Body of pancreas (tissue), 4 donors: ENCODE measurements at regions of chr19 and their contacts with region 1.

Region 1: DNA sequence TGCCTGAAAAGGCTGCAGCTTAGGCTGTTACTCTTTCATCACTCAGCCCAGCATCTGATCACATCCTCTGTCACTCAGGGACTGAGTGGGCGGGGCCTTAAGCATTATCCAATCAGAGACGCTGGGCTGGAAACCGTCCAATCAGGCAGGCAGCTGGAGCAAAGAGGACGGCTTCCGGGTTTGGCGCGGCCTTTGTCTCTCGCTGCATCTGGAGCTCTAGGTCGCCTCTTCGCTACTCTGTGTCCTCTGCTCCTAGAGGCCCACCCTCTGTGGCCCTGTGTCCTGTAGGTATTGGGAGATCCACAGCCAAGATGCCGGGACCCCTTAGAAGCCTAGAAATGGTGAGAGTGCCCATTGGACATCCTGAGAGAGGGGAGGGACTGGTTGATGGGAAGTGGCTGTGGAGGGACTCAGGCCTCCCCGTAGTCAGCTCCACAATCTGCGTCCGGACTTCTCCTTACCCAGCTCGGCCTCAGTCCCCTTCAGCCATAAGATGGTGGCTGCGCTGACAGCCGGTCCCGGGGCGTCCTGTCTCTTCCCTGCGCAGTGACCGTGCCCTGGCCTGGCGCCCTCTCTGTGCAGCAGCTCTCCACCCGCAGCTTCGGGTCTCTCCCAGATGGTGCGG is at the start of gene ZNF486:
- DNase-seq: peak; percentile 97 to 99 (median 98)
- ATAC-seq: peak; percentile 97
- H3K4me3 ChIP-seq: peak within 1 kb of the TSS; percentile 53 to 74
- H3K27ac ChIP-seq: peak within 1 kb of the TSS; percentile 34 to 83 (median 72)
- H3K4me1 ChIP-seq: peaks cover 9% of the 10 kb centered on the region
- H3K27me3 ChIP-seq: no peaks in the 10 kb centered on the region
- CTCF ChIP-seq: no peak
- POLR2A ChIP-seq: peak; percentile 51 to 88 (median 77)
- total RNA-seq, gene ZNF486: 3.0 to 6.2 TPM

Region 2: DNA sequence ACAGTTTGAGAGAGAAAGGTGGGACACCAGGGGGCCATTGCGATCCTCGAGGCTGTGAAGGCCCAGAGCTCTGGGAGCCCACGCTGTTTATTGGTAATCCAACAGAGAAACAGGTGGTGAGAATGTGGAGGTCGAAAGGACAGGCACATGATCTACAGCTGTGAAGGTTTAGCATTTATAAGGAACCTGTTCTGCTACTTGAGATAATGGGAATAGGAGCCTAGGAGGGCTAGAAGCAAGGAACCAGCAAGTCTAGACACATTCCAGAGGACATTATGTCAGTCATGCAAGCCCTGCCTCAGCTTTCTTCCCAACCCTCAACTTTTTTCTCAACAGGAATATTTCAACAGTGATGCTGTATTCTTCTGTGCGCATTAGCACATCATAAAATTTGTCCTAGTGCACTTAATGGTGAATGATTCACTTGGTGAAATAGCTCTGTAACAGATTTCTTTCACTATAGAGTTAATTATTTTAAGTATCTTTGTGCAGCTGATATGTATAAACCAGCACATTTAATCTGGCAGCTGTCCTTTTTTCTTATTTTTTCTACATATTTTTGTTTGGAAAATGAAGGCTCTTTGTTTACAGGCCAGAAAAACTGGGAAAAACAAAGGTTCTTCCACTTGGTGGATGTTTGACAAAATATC is 63.9 kb before region 1 on chr19:
- intact Hi-C with region 1: loop called (anchors 10 kb)
- DNase-seq: no peak
- ATAC-seq: no peak
- H3K4me3 ChIP-seq: no peak overlapping the region
- H3K27ac ChIP-seq: no peak overlapping the region
- H3K4me1 ChIP-seq: no peaks in the 10 kb centered on the region
- H3K27me3 ChIP-seq: no peaks in the 10 kb centered on the region
- CTCF ChIP-seq: no peak
- POLR2A ChIP-seq: no peak

Region 3: GRCh38 chr19:20482721-20483120 is 315.6 kb after region 1 on chr19:
- intact Hi-C with region 1: no loop called
- DNase-seq: peak in 2 of 4 donors; percentile 12 to 60
- ATAC-seq: no peak
- H3K4me3 ChIP-seq: no peak overlapping the region
- H3K27ac ChIP-seq: no peak overlapping the region
- H3K4me1 ChIP-seq: no peaks in the 10 kb centered on the region
- H3K27me3 ChIP-seq: no peaks in the 10 kb centered on the region
- CTCF ChIP-seq: no peak
- POLR2A ChIP-seq: no peak